ENCODE measurements at regions of chr11 and their contacts with region 1.

Region 1: DNA sequence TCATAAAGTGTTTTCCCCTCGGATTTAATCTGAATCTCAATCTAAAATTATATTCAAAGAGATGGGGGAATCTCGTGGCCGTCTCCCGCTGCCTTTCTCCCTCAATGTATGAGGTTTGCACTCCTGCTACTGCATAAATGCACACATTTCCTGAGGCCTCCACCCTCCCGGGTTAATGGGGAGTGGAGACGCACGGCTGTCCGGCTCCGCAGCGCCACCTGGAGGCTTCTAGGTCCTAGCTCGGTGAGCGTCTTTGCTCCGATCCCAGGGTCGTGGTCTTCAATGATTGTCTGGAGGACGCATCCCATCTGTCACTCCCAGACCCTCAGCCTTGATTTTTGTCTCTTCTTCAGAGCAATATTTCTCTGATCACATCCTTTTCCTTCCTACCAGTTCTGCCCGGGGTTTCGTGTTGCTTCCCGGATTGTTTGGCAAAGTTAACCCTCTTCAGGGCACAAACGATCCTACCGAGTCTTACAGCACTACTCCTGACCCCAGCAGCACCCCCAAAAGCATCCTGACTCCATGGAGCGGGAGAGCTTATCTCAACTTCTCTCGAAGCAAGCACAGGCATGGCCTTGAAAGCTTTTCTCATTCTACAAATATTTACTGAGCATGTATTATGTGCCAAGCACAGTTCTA is at the start of gene LMO1:
- DNase-seq: peak; percentile 72
- ATAC-seq: peak; percentile 75
- H3K4me3 Mint-ChIP-seq: peak within 1 kb of the TSS; percentile 80
- H3K27ac Mint-ChIP-seq: no peak within 1 kb of the TSS
- H3K4me1 Mint-ChIP-seq: peaks cover 10% of the 10 kb centered on the region
- H3K27me3 Mint-ChIP-seq: peaks cover 61% of the 10 kb centered on the region
- CTCF ChIP-seq: no peak
- total RNA-seq, gene LMO1: not detected in 2 replicates

Region 2: GRCh38 chr11:8201644-8202365 is 62.1 kb before region 1 on chr11:
- CTCF ChIA-PET with region 1: interaction called, 13 read pairs
- POLR2A ChIA-PET with region 1: interaction called, 3 read pairs
- intact Hi-C with region 1: loop called (anchors 5 kb)
- DNase-seq: peak; percentile 36
- ATAC-seq: peak; percentile 85
- H3K4me3 Mint-ChIP-seq: peak overlapping the region; percentile 16
- H3K27ac Mint-ChIP-seq: peak overlapping the region; percentile 87
- H3K4me1 Mint-ChIP-seq: peaks cover 74% of the 10 kb centered on the region
- H3K27me3 Mint-ChIP-seq: no peaks in the 10 kb centered on the region
- CTCF ChIP-seq: no peak

Region 3: GRCh38 chr11:8225589-8226036 is 38.3 kb before region 1 on chr11:
- CTCF ChIA-PET with region 1: interaction called, 5 read pairs
- POLR2A ChIA-PET with region 1: no interaction called
- intact Hi-C with region 1: loop called (anchors 1 kb)
- DNase-seq: peak; percentile 67
- ATAC-seq: peak; percentile 79
- H3K4me3 Mint-ChIP-seq: no peak overlapping the region
- H3K27ac Mint-ChIP-seq: no peak overlapping the region
- H3K4me1 Mint-ChIP-seq: no peaks in the 10 kb centered on the region
- H3K27me3 Mint-ChIP-seq: peaks cover 3% of the 10 kb centered on the region
- CTCF ChIP-seq: no peak

Region 4: DNA sequence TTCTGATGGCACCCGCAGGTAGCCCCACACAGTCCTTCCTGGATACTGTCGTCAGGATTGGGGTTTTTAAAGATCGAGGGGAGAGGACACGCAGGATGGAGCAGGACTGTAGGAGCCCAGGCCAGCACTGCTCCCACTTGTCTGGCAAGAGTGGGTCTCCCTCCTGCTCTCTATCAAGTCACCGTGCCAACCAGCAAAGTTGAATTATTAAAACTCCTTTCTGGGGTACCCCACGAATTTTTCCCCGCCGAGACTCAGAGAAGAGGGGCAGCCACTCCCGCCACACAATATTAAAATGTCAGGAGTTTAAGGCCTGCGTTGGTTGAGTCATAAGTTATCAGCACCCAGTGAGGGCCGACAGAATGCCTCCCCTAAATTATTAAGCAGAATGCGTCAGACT is 10.3 kb before region 1 on chr11:
- CTCF ChIA-PET with region 1: interaction called, 15 read pairs
- POLR2A ChIA-PET with region 1: no interaction called
- intact Hi-C with region 1: no loop called
- DNase-seq: peak; percentile 7
- ATAC-seq: no peak
- H3K4me3 Mint-ChIP-seq: no peak overlapping the region
- H3K27ac Mint-ChIP-seq: no peak overlapping the region
- H3K4me1 Mint-ChIP-seq: no peaks in the 10 kb centered on the region
- H3K27me3 Mint-ChIP-seq: peaks cover 5% of the 10 kb centered on the region
- CTCF ChIP-seq: no peak

Region 5: GRCh38 chr11:8338138-8338537 is 74.2 kb after region 1 on chr11:
- CTCF ChIA-PET with region 1: interaction called, 3 read pairs
- POLR2A ChIA-PET with region 1: no interaction called
- intact Hi-C with region 1: loop called (anchors 5 kb)
- DNase-seq: no peak
- ATAC-seq: no peak
- H3K4me3 Mint-ChIP-seq: no peak overlapping the region
- H3K27ac Mint-ChIP-seq: no peak overlapping the region
- H3K4me1 Mint-ChIP-seq: peaks cover 18% of the 10 kb centered on the region
- H3K27me3 Mint-ChIP-seq: no peaks in the 10 kb centered on the region
- CTCF ChIP-seq: no peak

Measured in activated B cell treated with CpG ODN at 0.5 μM for 24 hours (primary cell).